ENCODE measurements at regions of chr7 and their contacts with region 1.

Region 1: DNA sequence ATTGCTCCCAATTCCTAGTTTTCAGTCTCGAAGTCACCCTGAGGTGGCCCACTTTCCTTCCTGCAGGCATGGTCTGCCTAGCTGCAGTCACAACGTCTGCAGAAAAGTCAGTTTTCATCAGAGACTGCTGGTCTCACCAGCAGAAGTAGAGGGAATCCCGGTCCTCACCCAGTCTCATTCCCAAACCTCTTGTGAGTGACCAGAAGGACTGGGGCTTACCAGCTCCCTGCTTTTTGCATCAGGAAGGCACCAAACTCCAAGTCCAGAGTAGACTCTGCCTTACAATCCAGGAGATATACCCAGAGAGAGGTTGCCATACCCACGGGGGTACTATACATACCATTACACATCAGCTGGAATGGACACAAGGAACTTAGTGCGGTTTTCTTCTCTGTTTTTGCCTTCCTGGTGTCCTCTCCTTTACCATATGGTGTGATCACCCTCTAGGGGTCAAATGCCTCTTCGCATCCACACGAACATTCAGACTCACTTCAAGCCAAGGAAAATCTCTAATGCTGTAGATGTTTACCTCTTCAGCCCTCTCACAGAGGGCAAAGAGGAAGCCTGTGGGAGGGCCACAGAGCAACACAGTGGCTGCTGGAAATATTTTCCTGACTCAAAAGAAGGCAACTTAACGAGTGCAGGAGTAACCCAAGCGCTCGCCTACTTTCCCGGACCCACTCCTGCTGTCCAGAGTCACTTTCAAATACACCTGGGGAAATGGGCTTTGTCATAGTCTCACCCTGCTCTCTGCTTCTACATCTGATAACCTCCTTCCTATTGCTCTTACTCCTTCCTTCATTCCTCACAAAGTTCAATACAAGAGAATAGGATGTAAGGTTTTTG is 220.9 kb downstream of the C7orf25 start:
- DNase-seq: no peak
- H3K4me3 ChIP-seq: no peak overlapping the region
- H3K27ac ChIP-seq: peak overlapping the region in 3 of 4 donors; percentile 57 to 67 (median 58)
- H3K4me1 ChIP-seq: peaks cover 0 to 64% (median 44%) of the 10 kb centered on the region in 4 donors
- H3K27me3 ChIP-seq: no peaks in the 10 kb centered on the region
- CTCF ChIP-seq: peak; percentile 56 to 73 (median 60)
- EP300 ChIP-seq: no peak
- POLR2A ChIP-seq: no peak

Region 2: DNA sequence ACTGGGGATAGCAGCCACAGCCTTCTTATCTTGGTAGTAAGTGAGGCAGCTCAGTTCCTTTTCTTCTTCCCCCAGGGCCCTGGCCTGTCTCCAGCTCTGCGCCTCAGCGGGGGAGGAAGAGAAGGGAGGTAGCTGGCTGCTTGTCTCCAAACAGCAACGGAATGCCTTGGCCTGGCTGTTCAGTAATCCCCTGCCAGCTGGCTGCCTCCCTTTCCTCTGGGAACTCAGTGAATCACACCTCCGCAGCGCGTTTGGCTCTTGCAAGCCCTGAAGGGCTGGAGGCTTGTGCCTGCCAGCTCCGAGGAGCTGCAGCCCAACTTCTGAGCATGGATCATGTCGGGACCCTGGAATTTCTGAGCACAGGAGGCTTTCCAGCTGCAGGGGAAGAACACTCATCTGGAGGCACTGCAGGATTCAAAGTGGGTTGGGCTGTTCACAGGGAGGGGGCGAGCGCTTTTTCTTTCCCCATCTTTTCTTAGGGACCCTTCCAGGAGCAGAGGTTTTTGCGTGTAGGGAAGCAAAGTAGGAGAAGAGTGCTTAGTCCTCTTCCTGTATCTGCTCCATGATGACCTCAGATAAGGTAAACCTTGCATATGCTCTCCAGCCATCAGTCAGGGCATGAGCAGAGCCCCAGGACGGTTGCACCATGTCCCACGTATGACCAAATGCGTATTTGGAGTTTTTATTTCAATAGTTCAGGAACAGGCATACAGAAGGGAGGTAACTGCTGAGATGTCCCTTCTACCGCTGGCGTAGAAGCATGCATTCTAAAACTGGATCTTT is 734.9 kb before region 1 on chr7:
- intact Hi-C with region 1: loop called (anchors 5 kb)
- DNase-seq: peak; percentile 99
- H3K4me3 ChIP-seq: peak overlapping the region in 1 of 4 donors; percentile 4
- H3K27ac ChIP-seq: peak overlapping the region; percentile 60 to 80 (median 69)
- H3K4me1 ChIP-seq: peaks cover 0 to 48% (median 32%) of the 10 kb centered on the region in 4 donors
- H3K27me3 ChIP-seq: no peaks in the 10 kb centered on the region
- CTCF ChIP-seq: no peak
- EP300 ChIP-seq: peak in 2 of 4 donors; percentile 6 to 27
- POLR2A ChIP-seq: no peak

Region 3: GRCh38 chr7:42097757-42098191 is 593.2 kb before region 1 on chr7:
- intact Hi-C with region 1: loop called (anchors 10 kb)
- DNase-seq: no peak
- H3K4me3 ChIP-seq: no peak overlapping the region
- H3K27ac ChIP-seq: peak overlapping the region; percentile 63 to 77 (median 72)
- H3K4me1 ChIP-seq: peaks cover 0 to 52% (median 37%) of the 10 kb centered on the region in 4 donors
- H3K27me3 ChIP-seq: no peaks in the 10 kb centered on the region
- CTCF ChIP-seq: no peak
- EP300 ChIP-seq: no peak
- POLR2A ChIP-seq: no peak

Region 4: DNA sequence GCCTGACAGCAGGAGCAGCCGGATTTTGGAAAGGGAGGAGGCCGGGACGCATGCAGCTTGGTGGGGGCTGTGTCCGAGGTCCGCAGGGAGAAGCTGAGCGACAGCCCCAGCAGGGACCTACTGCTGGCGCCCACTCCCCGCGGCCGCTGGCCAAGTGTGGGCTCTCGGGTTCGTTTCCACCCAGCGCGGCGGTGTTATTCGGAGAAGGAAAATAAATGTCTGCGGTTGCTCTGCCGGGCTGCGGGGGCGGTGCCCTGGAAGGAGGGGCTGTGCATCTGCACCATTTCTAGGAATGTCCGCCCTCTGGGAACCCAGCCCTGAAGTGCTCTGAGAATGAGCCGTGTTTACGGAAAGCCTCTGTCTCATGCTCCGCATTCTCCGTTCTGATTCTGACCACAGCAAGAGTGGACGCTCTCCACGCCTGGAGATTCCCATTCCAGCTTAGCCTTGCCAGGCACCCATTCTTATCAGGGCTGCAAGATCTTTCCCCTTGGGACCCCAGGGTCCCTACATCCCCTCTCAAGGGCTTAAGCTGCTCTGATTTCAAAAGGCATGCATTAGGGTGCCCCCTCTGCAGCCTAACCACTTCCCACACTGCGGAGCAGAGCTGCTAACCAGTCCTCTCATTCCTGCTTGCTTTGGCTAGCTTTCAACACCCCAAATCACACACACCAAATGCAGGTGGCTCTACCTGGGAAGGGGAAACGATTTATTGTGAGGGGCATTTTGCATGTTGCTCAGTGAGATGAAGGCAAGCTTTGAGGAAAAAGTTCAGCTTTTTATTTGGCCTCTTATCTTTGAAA is 197.4 kb before region 1 on chr7:
- intact Hi-C with region 1: loop called (anchors 5 kb)
- DNase-seq: peak; percentile 94
- H3K4me3 ChIP-seq: peak overlapping the region; percentile 41 to 59 (median 54)
- H3K27ac ChIP-seq: peak overlapping the region; percentile 69 to 92 (median 88)
- H3K4me1 ChIP-seq: peaks cover 0 to 63% (median 46%) of the 10 kb centered on the region in 4 donors
- H3K27me3 ChIP-seq: no peaks in the 10 kb centered on the region
- CTCF ChIP-seq: no peak
- EP300 ChIP-seq: peak in 3 of 4 donors; percentile 51 to 86 (median 83)
- POLR2A ChIP-seq: no peak

Region 5: DNA sequence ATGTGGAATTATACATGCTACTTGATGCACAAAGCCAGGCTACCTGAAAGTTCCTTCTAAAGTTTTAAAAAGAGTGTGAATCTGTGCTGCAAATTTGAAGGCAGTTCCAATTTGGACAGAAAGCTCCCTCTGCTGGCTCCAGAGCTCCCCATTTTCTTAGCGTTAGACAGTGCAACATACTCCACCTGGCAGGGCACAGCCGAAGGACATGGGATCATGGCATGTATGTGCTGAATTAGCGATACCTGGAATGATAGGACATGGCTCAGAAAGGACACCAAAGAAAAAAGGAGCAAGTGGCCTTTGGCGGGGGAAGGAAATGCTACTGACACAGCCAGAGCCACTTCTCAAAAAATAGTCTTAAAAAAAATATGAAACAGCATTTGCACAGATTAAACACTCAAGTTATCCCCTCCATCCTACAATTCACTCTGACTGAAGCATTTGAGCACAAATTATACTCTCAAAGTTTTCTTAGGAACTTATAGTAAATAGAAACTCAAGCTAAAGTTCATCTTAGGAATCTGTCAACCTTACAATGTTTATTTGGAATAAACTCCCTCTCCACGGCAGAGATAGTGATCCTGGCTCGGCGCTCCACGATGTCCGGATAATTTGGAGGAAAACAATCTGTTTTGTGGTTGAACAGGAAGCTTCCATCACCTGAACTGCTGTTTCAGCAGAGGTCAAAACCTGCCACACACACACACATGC is 140.9 kb after region 1 on chr7:
- intact Hi-C with region 1: loop called (anchors 5 kb)
- DNase-seq: peak; percentile 80
- H3K4me3 ChIP-seq: no peak overlapping the region
- H3K27ac ChIP-seq: peak overlapping the region in 3 of 4 donors; percentile 40 to 69 (median 65)
- H3K4me1 ChIP-seq: peaks cover 0 to 26% (median 20%) of the 10 kb centered on the region in 4 donors
- H3K27me3 ChIP-seq: no peaks in the 10 kb centered on the region
- CTCF ChIP-seq: peak; percentile 55 to 76 (median 72)
- EP300 ChIP-seq: no peak
- POLR2A ChIP-seq: no peak

Measured in sigmoid colon (tissue), 7 donors.